K562 (cell line): ENCODE measurements at regions of chr9 and their contacts with region 1.

Region 1: GRCh38 chr9:120875954-120876841 is 790 bp downstream of the PHF19 start:
- DNase-seq: peak; percentile 100
- ATAC-seq: peak; percentile 84
- H3K4me3 ChIP-seq: peak overlapping the region; percentile 74
- H3K27ac ChIP-seq: peak overlapping the region; percentile 95
- H3K4me1 ChIP-seq: peaks cover 45 to 50% of the 10 kb centered on the region in 2 experiments
- H3K27me3 ChIP-seq: no peaks in the 10 kb centered on the region; a peak in 1 of 5 replicates
- CTCF ChIP-seq: peak in 1 of 3 experiments; percentile 30; a peak in 2 of 6 replicates
- EP300 ChIP-seq: peak; percentile 91
- POLR2A ChIP-seq: no peak
- RAD21 ChIP-seq: no peak

Region 2: DNA sequence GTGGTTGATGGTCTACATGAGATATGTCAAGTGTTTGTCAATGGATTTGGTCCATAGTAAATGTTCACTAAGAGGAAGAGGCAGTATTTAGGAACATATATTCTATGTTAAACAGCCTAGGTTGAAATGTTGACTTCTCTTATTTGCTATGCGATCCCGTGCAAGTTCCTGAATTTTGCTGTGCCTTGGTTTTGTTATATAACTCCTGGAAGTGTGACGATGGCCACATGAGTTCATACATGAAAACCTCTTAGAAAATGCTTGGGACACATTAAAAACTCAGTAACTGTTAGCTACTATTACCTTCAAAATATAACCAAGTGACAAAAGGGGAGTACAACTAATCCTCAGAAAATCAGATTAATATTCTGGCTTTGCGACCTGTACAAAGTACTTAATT is 61.1 kb before region 1 on chr9:
- CTCF ChIA-PET with region 1: no interaction called
- POLR2A ChIA-PET with region 1: interaction called, 13 read pairs
- in situ Hi-C with region 1: no loop called
- intact Hi-C with region 1: no loop called
- DNase-seq: no peak
- ATAC-seq: no peak
- H3K4me3 ChIP-seq: no peak overlapping the region
- H3K27ac ChIP-seq: no peak overlapping the region
- H3K4me1 ChIP-seq: no peaks in the 10 kb centered on the region
- H3K27me3 ChIP-seq: no peaks in the 10 kb centered on the region
- CTCF ChIP-seq: no peak
- EP300 ChIP-seq: no peak
- POLR2A ChIP-seq: no peak
- RAD21 ChIP-seq: no peak

Region 3: DNA sequence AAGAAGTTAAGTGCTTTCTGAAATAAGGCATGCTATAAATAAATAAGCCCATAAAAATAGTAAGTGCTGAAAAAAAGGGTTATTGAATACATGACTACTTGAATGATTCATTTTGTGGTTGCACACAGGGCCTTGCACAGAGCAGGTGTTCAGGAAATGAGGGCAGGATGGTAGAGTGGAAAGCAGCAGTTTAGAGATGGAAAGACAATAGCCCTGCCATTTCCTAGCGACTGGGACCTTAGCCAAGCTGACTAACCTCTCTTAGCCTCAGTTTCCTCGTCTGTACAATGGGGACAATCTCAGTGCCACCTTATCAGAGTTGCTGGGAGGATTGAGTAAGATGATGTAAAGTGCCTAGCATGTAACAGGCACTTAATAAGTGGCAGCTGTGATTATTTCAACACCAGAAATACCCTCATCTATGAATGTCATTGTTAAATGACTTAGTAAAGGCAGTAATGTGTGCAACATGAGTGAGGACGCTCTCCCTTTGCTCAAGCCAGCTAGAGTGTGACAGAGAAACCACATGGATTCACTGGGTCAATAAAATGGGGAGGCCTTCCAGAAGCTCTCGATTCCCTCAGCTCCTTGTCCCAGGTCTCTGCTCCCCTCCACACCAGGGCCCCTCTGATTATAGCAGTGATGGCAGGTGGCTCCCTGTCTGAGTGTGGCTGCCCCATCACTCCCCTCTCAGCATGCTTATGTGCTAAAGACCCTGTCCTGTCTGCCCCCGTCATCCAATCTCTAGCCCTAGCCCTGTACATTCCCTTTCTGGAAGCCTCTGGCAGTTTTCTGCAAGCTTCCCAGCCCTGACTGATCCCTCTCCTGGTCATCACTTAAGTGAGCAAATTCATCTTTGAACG is 16.8 kb after region 1 on chr9:
- CTCF ChIA-PET with region 1: interaction called, 4 read pairs
- POLR2A ChIA-PET with region 1: interaction called, 464 read pairs
- in situ Hi-C with region 1: no loop called
- intact Hi-C with region 1: loop called (anchors 1 kb)
- DNase-seq: peak in 3 of 4 experiments; percentile 24 to 33 (median 31)
- ATAC-seq: no peak
- H3K4me3 ChIP-seq: no peak overlapping the region
- H3K27ac ChIP-seq: peak overlapping the region; percentile 10; the same call in 1 of the 3 replicates
- H3K4me1 ChIP-seq: peaks cover 41 to 57% of the 10 kb centered on the region in 2 experiments
- H3K27me3 ChIP-seq: no peaks in the 10 kb centered on the region
- CTCF ChIP-seq: no peak
- EP300 ChIP-seq: no peak
- POLR2A ChIP-seq: no peak
- RAD21 ChIP-seq: no peak

Region 4: DNA sequence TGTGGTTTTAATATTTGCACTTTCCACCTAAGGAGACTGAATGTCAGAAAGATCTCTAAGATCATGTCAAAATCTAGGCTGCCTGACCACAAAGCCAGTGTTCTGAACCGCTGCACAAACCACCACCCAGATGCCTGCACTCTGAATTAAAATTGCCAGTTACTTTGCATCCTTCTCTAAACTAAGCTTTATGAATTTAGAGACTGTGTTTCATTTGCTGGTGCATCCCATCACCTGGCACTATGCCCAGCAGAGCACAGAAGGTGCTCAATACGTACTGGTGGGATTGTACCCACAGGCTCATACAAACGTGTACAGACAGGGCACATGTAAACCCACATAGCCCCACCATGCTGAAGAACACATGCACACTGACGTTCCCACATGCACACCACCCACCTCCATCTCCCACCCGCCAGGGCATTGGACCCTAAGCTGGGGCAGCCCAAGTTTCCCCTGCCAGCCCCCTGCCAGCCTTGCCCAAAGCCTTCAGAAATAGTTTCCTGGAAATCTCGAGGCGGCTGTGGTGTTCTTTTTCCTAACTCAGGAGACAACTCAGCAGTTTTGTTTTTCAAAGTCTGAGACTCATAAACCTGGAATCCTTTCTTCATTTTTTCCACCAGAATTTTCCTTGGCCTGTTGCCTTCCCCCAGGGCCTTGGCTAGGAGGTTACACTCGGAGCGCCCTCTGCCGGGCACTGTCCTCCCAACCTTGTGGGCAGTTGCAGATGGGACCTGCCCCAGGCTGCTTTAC is 60.0 kb after region 1 on chr9:
- CTCF ChIA-PET with region 1: interaction called, 3 read pairs
- POLR2A ChIA-PET with region 1: interaction called, 3 read pairs
- in situ Hi-C with region 1: no loop called
- intact Hi-C with region 1: loop called (anchors 2 kb)
- DNase-seq: peak; percentile 85 to 92 (median 90)
- ATAC-seq: peak; percentile 96
- H3K4me3 ChIP-seq: no peak overlapping the region
- H3K27ac ChIP-seq: no peak overlapping the region
- H3K4me1 ChIP-seq: peaks cover 13 to 40% of the 10 kb centered on the region in 2 experiments
- H3K27me3 ChIP-seq: peaks cover 2 to 7% of the 10 kb centered on the region in 2 experiments; a peak in 3 of 5 replicates
- CTCF ChIP-seq: peak; percentile 91 to 96 (median 92)
- EP300 ChIP-seq: no peak
- POLR2A ChIP-seq: no peak
- RAD21 ChIP-seq: peak; percentile 89 to 96

Region 5: DNA sequence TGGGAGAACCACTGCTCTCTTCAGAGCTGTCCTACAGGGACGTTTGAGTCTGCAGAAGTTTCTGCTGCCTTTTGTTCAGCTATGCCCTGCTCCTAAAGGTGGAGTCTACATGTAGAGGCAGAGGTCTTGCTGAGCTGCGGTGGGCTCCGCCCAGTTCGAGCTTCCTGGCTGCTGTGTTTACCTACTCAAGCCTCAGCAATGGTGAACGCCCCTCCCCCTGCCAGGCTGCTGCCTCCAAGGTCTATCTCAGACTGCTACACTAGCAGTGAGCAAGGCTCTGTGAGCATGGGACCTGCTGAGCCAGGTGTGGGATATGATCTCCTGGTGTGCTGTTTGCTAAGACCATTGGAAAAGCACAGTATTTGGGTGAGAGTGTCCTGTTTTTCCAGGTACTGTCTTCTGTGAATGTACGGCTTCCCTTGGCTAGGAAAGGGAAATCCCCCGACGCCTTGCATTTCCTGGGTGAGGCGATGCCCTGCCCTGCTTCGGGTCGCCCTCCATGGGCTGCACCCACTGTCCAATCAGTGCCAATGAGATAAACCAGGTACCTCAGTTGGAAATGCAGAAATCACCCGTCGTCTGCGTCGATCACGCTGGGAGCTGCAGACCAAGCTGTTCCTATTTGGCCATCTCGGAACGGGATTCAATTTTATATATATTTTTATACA is 257.1 kb after region 1 on chr9:
- CTCF ChIA-PET with region 1: no interaction called
- POLR2A ChIA-PET with region 1: no interaction called
- in situ Hi-C with region 1: no loop called
- intact Hi-C with region 1: no loop called
- DNase-seq: peak; percentile 22 to 79 (median 34)
- ATAC-seq: peak; percentile 98
- H3K4me3 ChIP-seq: no peak overlapping the region
- H3K27ac ChIP-seq: no peak overlapping the region; the same call in 2 of the 3 replicates
- H3K4me1 ChIP-seq: peaks cover 5 to 7% of the 10 kb centered on the region in 2 experiments; a peak in 3 of 5 replicates
- H3K27me3 ChIP-seq: no peaks in the 10 kb centered on the region
- CTCF ChIP-seq: no peak
- EP300 ChIP-seq: no peak
- POLR2A ChIP-seq: no peak
- RAD21 ChIP-seq: no peak